HAP-1 (cell line): ENCODE measurements at regions of chr6 and their contacts with region 1.

Region 1: GRCh38 chr6:17589406-17590096 is 10.6 kb upstream of the FAM8A1 start:
- DNase-seq: no peak
- H3K4me3 ChIP-seq: no peak overlapping the region
- H3K4me1 ChIP-seq: no peaks in the 10 kb centered on the region
- H3K27me3 ChIP-seq: no peaks in the 10 kb centered on the region

Region 2: GRCh38 chr6:17156112-17156921 is 433.2 kb before region 1 on chr6:
- in situ Hi-C with region 1: loop called (anchors 5 kb)
- DNase-seq: peak; percentile 72 to 81
- H3K4me3 ChIP-seq: no peak overlapping the region
- H3K4me1 ChIP-seq: no peaks in the 10 kb centered on the region
- H3K27me3 ChIP-seq: no peaks in the 10 kb centered on the region